Activated T-helper 2 cell treated with anti-CD3 and anti-CD28 coated beads, Interferon-gamma antibody, Interleukin-2, Interleukin-4, amounts not matched to agents 10 μg/mL and 5 μg/mL and 100 μg/mL, durations not matched to agents 14 hours and 24 hours and 36 hours (primary cell): ENCODE measurements at regions of chr1 and their contacts with region 1.

Region 1: DNA sequence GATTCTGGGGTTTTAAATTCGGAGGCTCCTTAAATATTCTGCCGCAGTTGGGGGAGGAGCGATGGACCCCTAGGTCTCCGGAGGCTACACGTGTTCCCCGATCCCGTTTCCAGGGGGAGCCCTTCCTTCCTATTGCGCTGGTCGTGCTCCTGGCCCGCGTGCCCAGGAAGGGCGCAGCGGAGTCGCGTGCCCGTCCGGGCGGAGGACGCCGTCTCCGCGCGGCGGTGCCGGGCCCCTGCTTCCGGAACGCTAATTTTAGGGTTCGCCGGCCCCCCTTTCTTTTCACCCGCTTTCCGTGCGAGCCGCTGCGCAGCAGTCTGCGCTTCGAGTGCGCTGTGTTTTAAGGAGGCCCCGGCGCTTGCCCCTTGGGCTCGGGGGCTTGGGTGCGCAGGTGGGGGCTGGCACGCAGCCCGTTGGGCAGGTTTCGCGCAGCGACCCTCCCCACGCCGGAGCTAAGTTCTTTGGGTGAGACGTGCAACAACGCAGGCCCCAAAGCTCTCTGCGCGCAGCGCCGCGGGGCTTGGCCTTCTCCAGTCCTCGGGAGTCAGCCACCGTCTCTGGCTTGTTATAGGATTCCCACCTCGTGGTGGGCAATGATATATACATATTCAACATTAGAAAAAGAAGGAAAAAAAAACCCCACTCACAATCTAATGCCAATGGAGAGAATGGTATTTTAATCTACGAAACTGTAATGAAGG is 43.5 kb upstream of the DNAJC6 start:
- DNase-seq: peak; percentile 17
- H3K4me3 Mint-ChIP-seq: peak overlapping the region; percentile 57
- H3K27ac Mint-ChIP-seq: no peak overlapping the region
- H3K4me1 Mint-ChIP-seq: peaks cover 28% of the 10 kb centered on the region
- H3K27me3 Mint-ChIP-seq: peaks cover 48% of the 10 kb centered on the region

Region 2: GRCh38 chr1:65309304-65310077 is 43.7 kb after region 1 on chr1 and contains the start of gene DNAJC6:
- intact Hi-C with region 1: loop called (anchors 2 kb)
- DNase-seq: peak; percentile 38
- H3K4me3 Mint-ChIP-seq: peak within 1 kb of the TSS; percentile 37
- H3K27ac Mint-ChIP-seq: no peak within 1 kb of the TSS
- H3K4me1 Mint-ChIP-seq: peaks cover 6% of the 10 kb centered on the region
- H3K27me3 Mint-ChIP-seq: peaks cover 41% of the 10 kb centered on the region
- total RNA-seq, gene DNAJC6: 1.9 and 3.0 TPM in 2 replicates

Region 3: GRCh38 chr1:65393347-65393746 is 127.5 kb after region 1 on chr1:
- intact Hi-C with region 1: loop called (anchors 5 kb)
- DNase-seq: peak; percentile 13
- H3K4me3 Mint-ChIP-seq: no peak overlapping the region
- H3K27ac Mint-ChIP-seq: peak overlapping the region; percentile 62
- H3K4me1 Mint-ChIP-seq: peaks cover 80% of the 10 kb centered on the region
- H3K27me3 Mint-ChIP-seq: no peaks in the 10 kb centered on the region